ENCODE measurements at regions of chr17 and their contacts with region 1.

Region 1: GRCh38 chr17:71966459-71967313 is 154.1 kb upstream of the SOX9 start:
- DNase-seq: peak; percentile 39 to 84
- H3K4me3 ChIP-seq: no peak overlapping the region
- H3K27ac ChIP-seq: peak overlapping the region; percentile 42 to 44
- H3K4me1 ChIP-seq: peaks cover 0 to 16% (median 12%) of the 10 kb centered on the region in 4 donors
- H3K27me3 ChIP-seq: no peaks in the 10 kb centered on the region
- CTCF ChIP-seq: no peak

Region 2: GRCh38 chr17:71872843-71873485 is 93.7 kb before region 1 on chr17:
- intact Hi-C with region 1: no loop called
- DNase-seq: no peak
- H3K4me3 ChIP-seq: no peak overlapping the region
- H3K27ac ChIP-seq: no peak overlapping the region
- H3K4me1 ChIP-seq: no peaks in the 10 kb centered on the region
- H3K27me3 ChIP-seq: no peaks in the 10 kb centered on the region
- CTCF ChIP-seq: no peak

Region 3: DNA sequence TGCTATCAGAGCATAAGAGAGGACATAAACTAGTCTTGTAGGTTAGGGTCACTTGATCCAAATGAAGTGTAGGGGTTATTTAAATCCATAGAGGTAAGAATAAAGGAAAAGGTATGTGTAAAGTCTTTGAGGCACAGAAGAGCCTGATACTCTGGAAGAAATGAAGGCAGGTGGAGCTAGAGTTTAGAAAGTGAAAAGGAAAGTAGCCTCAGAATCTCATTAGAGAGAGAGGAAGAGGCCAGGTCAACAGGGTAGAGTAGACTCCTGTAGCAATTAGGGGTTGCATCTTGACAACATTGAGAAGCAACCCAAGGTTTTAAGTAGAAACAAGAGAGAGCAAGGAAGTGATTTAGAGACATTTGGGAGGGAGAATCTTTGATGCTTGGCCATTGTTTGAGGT is 81.0 kb before region 1 on chr17:
- intact Hi-C with region 1: no loop called
- DNase-seq: no peak
- H3K4me3 ChIP-seq: no peak overlapping the region
- H3K27ac ChIP-seq: no peak overlapping the region
- H3K4me1 ChIP-seq: no peaks in the 10 kb centered on the region
- H3K27me3 ChIP-seq: no peaks in the 10 kb centered on the region
- CTCF ChIP-seq: no peak

Region 4: GRCh38 chr17:71922439-71922838 is 44.2 kb before region 1 on chr17:
- intact Hi-C with region 1: no loop called
- DNase-seq: no peak
- H3K4me3 ChIP-seq: no peak overlapping the region
- H3K27ac ChIP-seq: no peak overlapping the region
- H3K4me1 ChIP-seq: peaks cover 0 to 9% (median 0%) of the 10 kb centered on the region in 4 donors
- H3K27me3 ChIP-seq: no peaks in the 10 kb centered on the region
- CTCF ChIP-seq: no peak

Region 5: DNA sequence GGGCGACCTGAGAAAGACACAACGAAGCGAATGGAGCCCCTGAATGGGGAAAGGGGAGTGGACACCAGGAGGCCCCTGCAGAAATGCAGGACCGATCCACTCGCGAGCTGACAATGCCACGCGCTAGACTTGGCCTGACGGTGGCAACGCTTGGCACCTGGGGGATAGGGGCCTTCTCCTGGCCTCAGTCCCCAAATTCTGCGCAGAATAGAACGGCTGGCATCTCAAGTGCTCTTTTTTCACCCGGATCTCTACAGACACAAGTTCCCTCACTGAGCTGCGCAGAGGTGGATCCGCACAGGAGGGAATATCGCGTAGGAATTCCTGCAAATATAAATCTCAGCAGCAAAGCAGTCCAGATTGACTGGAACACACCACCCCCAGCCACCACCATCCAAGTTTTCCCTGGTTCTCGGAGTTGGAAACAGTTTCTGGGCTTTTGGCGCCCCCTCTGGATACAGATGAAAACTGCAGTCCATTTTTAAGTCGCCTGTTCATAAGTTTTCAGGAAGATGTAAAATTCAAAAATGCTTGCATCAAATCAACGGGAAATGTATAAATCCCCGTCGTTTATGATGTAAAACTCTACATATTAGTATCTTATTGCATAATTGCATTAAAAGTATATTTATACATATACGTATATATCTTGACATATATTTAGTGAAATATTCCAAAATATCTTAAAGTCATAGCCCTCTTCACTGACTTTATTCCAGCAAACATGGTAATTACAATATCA is 151.8 kb after region 1 on chr17:
- intact Hi-C with region 1: loop called (anchors 10 kb)
- DNase-seq: peak; percentile 43 to 78
- H3K4me3 ChIP-seq: peak overlapping the region; percentile 33 to 48
- H3K27ac ChIP-seq: no peak overlapping the region
- H3K4me1 ChIP-seq: peaks cover 0 to 60% (median 44%) of the 10 kb centered on the region in 4 donors
- H3K27me3 ChIP-seq: peaks cover 0 to 38% of the 10 kb centered on the region in 2 donors
- CTCF ChIP-seq: peak; percentile 81 to 87

Measured in tibial artery (tissue), 4 donors.